ENCODE measurements at regions of chr10 and their contacts with region 1.

Region 1: GRCh38 chr10:88707429-88708285 is 1.6 kb downstream of the LIPK start:
- DNase-seq: no peak
- H3K4me3 ChIP-seq: no peak overlapping the region
- H3K27ac ChIP-seq: peak overlapping the region in 1 of 2 experiments; percentile 57; a peak in 2 of 4 replicates
- H3K4me1 ChIP-seq: peaks cover 4 to 12% of the 10 kb centered on the region in 2 experiments; a peak in 2 of 4 replicates
- H3K27me3 ChIP-seq: no peaks in the 10 kb centered on the region
- CTCF ChIP-seq: no peak
- EP300 ChIP-seq: peak in 1 of 2 experiments; percentile 65; a peak in 2 of 4 replicates
- RAD21 ChIP-seq: no peak

Region 2: GRCh38 chr10:88386821-88387773 is 320.6 kb before region 1 on chr10:
- CTCF ChIA-PET with region 1: no interaction called
- POLR2A ChIA-PET with region 1: no interaction called
- DNase-seq: peak; percentile 48
- H3K4me3 ChIP-seq: peak overlapping the region in 1 of 2 experiments; percentile 17; a peak in 1 of 4 replicates
- H3K27ac ChIP-seq: peak overlapping the region; percentile 55 to 98
- H3K4me1 ChIP-seq: peaks cover 9 to 35% of the 10 kb centered on the region in 2 experiments; a peak in 3 of 4 replicates
- H3K27me3 ChIP-seq: no peaks in the 10 kb centered on the region
- CTCF ChIP-seq: no peak
- EP300 ChIP-seq: 0 out of 4 replicates have a peak, but pooled peaks of 1 of the 2 experiments have one; percentile 4
- RAD21 ChIP-seq: 0 out of 2 replicates have a peak, but pooled peaks have one; percentile 0

Region 3: DNA sequence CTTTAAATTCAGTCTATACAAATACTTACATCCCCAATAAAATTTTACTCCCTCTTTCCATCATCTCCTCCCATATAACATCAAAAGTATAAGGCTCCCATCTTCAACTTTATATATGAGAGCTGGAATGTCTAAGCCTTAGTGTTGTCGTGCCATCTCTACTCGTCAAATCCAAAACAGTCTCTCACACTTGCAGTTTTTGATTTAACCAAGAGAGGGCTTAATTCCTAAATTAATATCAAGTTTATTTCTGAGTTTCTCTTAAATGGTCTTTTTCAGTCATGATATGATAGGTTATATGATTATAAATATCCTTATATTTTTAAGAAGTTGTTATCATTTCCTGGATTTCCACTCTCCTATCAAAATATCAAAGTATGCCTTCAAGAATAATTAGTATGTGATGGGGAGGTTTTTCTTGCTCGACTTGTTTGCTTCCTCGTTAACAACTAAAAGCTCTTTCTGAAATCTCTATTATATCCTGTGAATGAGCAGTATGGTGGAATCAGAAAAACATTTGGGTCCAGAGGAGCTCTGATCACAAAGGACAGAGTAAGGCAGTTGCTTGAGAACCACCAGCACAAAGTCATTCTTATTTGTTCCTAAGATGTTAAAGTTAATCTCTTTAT is 14.2 kb before region 1 on chr10:
- CTCF ChIA-PET with region 1: interaction called, 12 read pairs
- POLR2A ChIA-PET with region 1: no interaction called
- DNase-seq: no peak
- H3K4me3 ChIP-seq: no peak overlapping the region
- H3K27ac ChIP-seq: no peak overlapping the region
- H3K4me1 ChIP-seq: no peaks in the 10 kb centered on the region
- H3K27me3 ChIP-seq: no peaks in the 10 kb centered on the region
- CTCF ChIP-seq: peak; percentile 45
- EP300 ChIP-seq: no peak
- RAD21 ChIP-seq: no peak